Activated CD8-positive, alpha-beta T cell treated with anti-CD3 and anti-CD28 coated beads, Interleukin-2, amount 10 ng/mL, durations not matched to agents 7 days and 5 days (primary cell): ENCODE measurements at regions of chr11 and their contacts with region 1.

Region 1: DNA sequence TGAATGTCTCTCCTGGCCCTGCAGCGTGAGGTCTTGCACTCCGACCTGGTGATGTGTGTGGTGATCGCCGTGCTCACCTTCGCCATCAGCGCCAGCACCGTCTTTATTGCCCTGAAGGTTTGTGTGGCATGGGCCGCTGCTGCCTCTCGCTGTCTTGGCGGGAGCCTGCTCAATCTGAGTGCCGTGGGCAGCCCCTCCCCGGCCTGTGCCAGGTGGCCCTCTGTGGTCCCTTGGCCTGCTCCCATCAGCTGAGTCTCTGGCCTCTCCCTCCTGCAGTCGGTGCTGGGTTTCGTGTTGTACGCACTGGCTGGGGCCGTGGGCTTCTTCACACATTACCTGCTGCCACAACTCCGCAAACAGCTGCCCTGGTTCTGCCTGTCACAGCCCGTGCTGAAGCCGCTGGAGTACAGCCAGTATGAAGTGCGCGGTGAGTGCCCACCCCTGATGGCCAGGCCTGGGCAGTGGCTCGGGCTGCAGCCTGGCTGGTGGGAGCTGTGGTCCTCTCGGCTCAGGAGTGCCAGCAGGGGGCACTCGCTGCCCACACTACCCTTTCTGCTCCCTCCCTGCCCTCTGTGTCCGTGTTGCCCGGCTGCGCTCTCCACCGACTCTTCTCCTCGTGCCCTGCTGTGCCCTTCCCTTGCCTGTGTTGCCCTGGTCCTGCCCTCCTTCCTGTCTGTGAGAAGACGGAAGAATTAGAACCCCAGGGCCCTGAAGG is 10.2 kb downstream of the PCNX3 start:
- DNase-seq: peak; percentile 62
- ATAC-seq: peak; percentile 79
- H3K4me3 Mint-ChIP-seq: no peak overlapping the region
- H3K27ac Mint-ChIP-seq: no peak overlapping the region
- H3K4me1 Mint-ChIP-seq: peaks cover 7% of the 10 kb centered on the region
- H3K27me3 Mint-ChIP-seq: no peaks in the 10 kb centered on the region

Region 2: DNA sequence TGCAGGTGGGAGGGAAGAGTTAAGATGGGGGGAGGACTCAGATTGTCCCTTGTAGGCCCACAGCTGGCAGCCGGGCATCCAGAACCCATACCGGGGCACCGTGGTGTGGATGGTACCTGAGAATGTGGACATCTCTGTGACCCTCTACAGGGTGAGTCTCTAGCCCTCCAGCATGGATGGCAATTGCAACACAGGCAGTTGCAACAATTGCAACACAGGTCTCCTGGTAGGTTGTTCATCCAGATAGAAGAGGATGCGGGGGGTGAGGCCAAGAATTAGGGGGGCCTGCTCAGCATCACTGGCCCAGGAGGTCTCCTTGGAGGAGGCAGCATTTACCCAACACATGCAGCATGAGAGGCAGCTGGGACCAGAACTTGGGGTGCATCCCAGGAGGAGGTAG is 46.5 kb before region 1 on chr11:
- CTCF ChIA-PET with region 1: no interaction called
- POLR2A ChIA-PET with region 1: no interaction called
- DNase-seq: no peak
- ATAC-seq: no peak
- H3K4me3 Mint-ChIP-seq: no peak overlapping the region
- H3K27ac Mint-ChIP-seq: peak overlapping the region; percentile 52
- H3K4me1 Mint-ChIP-seq: peaks cover 49% of the 10 kb centered on the region
- H3K27me3 Mint-ChIP-seq: no peaks in the 10 kb centered on the region

Region 3: DNA sequence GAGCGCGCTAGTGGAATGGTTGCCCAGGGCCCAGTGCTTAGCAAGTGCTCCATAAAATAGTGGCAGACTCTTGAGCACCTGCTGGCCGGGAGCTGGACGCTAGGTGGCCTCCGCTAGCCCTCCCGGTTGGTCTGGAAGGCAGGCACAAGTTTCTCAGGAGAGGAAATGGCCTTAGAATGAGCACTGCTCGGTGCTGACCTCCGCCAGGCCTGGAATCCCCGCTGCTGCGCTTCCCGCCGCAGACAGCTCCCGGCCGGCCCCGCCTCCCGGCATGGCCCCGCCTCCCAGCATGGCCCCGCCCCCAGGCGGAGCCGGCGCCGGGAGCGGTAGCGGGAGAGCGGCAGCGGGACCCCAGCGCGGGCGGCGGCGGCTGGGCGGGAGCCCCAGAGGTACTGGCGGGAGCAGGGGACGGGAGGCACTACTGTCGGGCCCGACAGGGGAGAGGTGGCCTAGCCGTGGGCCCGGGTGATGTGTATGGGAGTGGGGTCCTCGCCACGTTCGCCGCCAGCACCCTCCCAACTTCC is 12.1 kb after region 1 on chr11 and contains the start of gene SIPA1:
- CTCF ChIA-PET with region 1: interaction called, 18 read pairs
- POLR2A ChIA-PET with region 1: interaction called, 3 read pairs
- DNase-seq: peak; percentile 72
- ATAC-seq: peak; percentile 55
- H3K4me3 Mint-ChIP-seq: peak within 1 kb of the TSS; percentile 98
- H3K27ac Mint-ChIP-seq: peak within 1 kb of the TSS; percentile 98
- H3K4me1 Mint-ChIP-seq: peaks cover 68% of the 10 kb centered on the region
- H3K27me3 Mint-ChIP-seq: no peaks in the 10 kb centered on the region
- total RNA-seq, gene SIPA1: 245 to 274 TPM

Region 4: DNA sequence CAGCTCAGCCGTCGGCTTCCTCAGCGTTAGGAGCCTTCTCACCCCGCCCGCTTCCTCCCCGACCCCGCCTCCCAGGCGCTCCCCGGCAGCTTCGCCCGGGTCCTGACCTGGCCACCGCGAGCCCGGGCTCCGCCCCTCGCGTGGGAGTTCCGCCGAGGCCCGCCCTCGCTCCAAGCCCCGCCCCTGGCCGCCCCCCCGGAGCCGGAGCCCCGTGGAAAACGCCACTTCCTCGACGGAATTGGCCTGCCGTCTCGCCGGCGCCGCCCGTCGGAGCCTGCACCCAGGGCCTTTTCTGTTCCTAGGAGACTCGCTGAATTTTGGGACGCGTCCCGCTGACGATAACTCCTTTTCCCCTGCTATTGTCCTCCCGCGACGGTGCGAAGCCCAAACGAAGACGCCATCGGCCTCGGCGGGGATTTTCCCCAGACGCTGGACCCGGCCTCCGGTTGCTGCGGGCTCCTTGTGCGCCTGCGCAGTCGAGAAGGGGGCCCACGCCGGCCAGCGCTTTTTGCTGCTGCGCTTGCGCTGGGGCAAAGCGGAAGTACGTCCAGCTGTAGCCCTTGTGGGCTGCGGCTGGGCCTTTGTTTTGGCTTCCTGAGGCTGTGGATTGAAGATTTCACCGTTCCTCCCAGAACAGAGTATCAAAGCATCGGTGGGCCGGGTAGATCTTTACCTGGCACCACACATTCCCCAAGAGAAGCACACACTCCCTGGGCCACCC is 26.9 kb after region 1 on chr11:
- CTCF ChIA-PET with region 1: interaction called, 16 read pairs
- POLR2A ChIA-PET with region 1: interaction called, 4 read pairs
- DNase-seq: peak; percentile 96
- ATAC-seq: peak; percentile 90
- H3K4me3 Mint-ChIP-seq: peak overlapping the region; percentile 77
- H3K27ac Mint-ChIP-seq: peak overlapping the region; percentile 90
- H3K4me1 Mint-ChIP-seq: peaks cover 48% of the 10 kb centered on the region
- H3K27me3 Mint-ChIP-seq: no peaks in the 10 kb centered on the region

Region 5: DNA sequence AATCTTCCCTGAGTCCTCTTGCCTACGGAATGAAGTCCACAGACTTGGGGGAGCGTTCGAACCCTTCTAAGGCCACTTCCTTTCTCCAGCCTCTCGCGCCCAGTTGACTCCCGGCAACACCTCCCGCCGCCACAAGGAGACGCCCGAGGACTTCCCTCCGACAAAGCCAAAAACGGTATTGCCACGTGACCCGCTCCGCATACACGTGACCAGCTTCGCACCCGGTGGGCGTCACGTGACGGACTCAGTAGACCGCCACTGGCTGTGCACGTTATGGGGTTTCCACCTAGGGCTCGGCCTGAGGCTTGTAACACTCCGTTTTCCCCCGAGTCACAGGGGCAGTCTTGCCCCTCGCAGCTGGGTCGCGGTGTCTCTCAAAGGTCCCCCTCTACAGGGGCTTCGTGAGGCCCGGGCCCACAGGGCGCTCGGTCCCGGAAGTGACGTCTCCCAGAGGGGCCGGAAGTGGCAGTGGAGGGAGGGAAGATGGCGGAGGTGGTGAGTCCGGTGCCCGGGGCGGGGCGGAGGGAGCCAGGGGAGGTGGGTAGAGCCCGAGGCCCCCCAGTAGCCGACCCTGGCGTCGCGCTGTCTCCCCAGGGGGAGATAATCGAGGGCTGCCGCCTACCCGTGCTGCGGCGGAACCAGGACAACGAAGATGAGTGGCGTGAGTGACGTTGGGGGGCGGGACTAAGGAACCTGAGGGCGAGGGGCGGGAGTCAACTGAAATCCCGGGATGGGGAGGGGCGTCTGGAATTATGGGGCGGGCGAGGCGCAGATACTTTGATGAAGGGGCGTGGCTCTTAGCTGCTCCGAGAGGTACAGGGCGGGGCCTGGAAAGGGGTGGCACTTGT is 86.2 kb after region 1 on chr11 and contains the start of gene KAT5:
- CTCF ChIA-PET with region 1: interaction called, 13 read pairs
- POLR2A ChIA-PET with region 1: no interaction called
- DNase-seq: peak; percentile 99
- ATAC-seq: peak; percentile 86
- H3K4me3 Mint-ChIP-seq: peak within 1 kb of the TSS; percentile 85
- H3K27ac Mint-ChIP-seq: peak within 1 kb of the TSS; percentile 99
- H3K4me1 Mint-ChIP-seq: peaks cover 30% of the 10 kb centered on the region
- H3K27me3 Mint-ChIP-seq: no peaks in the 10 kb centered on the region
- total RNA-seq, gene KAT5: 63.2 to 68.7 TPM

Region 6: GRCh38 chr11:66478729-66479393 is 853.1 kb after region 1 on chr11:
- CTCF ChIA-PET with region 1: no interaction called
- POLR2A ChIA-PET with region 1: no interaction called
- DNase-seq: peak; percentile 47
- ATAC-seq: no peak
- H3K4me3 Mint-ChIP-seq: peak overlapping the region; percentile 92
- H3K27ac Mint-ChIP-seq: peak overlapping the region; percentile 91
- H3K4me1 Mint-ChIP-seq: peaks cover 31% of the 10 kb centered on the region
- H3K27me3 Mint-ChIP-seq: no peaks in the 10 kb centered on the region